Naive thymus-derived CD4-positive, alpha-beta T cell (primary cell): ENCODE measurements at regions of chr19 and their contacts with region 1.

Region 1: DNA sequence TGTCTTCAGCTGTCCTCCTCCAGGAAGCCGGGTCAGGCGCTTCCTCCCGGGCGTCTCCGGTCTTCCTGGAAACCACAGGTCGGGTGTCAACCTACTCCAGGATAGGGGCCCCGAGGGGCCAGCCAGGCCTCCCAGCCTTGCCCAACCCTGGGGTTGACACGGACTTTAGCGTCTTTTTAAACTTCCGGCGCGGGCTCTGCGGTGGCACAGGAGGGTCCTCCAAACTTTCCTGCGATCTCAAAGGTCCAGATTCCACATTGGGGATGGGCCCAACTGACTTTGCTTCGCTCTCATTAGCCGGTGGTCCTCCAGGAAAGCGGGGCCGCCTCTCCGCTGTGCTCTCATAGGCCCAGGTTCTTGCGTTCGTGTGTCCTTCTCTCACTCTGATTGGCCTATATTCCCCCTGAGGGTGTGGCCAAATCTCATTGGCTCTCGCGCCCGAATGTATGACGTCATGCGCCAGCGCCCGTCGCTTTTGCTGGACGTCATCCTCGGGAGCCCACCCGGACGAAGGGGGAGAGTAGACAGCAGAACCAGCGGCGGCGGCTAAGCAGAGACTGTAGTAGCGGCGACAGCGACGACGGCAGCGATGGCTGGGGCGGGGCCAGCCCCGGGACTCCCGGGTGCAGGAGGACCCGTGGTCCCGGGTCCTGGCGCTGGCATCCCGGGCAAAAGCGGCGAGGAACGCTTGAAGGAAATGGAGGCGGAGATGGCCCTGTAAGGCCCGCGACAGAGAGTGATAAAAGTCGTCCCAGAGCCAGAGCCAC is at the start of gene RBM42:
- DNase-seq: peak; percentile 87 to 98 (median 97)
- ATAC-seq: peak; percentile 100
- H3K4me3 ChIP-seq: peak within 1 kb of the TSS; percentile 89
- H3K4me3 Mint-ChIP-seq: peak within 1 kb of the TSS; percentile 91 to 100 (median 98)
- H3K27ac ChIP-seq: peak within 1 kb of the TSS; percentile 89
- H3K27ac Mint-ChIP-seq: peak within 1 kb of the TSS; percentile 92 to 100 (median 99)
- H3K4me1 ChIP-seq: peaks cover 6 to 15% of the 10 kb centered on the region in 2 donors
- H3K4me1 Mint-ChIP-seq: peaks cover 12 to 35% (median 25%) of the 10 kb centered on the region in 7 donors
- H3K27me3 ChIP-seq: no peaks in the 10 kb centered on the region
- H3K27me3 Mint-ChIP-seq: no peaks in the 10 kb centered on the region
- total RNA-seq, gene RBM42: 39.0 to 98.2 (median 51.3) TPM

Region 2: DNA sequence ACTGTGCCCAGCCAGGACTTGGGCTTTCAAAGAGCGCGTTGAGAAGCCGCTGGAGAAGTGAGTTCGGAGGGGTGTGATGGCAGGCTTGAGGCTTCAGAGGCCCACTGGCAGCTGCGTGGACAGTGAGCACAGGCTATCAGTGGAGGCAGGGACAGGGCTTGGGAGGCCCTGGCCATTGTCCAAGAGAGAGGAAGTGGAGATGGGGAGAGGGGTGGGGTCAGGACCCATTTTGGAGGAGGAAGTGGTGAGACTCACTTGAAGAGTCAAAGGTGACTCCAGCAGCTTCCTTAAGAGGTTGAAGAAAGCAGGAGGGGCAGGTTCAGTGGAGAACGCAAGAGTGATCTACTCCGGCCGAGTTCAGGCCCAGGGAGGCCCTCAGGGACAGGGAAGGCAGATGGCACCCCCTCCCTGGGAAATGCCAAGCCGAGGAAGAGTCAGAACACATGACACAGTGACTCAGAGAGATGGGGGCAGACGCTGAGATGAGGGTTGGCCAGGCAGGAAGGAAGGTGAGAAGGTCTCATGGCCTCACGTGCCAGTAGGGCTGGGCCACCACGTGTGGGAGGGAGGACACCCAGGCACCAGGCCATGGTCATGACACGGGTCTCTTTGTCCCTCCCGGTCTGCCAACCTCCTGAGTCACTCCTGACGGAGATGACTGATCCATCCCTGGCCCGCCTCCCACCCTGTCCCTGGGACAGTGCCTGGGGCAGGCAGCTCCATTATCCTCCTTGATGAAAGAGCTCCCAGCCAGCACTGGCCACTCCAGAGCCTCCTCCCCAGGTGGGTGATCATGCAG is 309.9 kb before region 1 on chr19:
- CTCF ChIA-PET with region 1: no interaction called
- POLR2A ChIA-PET with region 1: no interaction called
- intact Hi-C with region 1: no loop called
- DNase-seq: peak in 1 of 9 donors; percentile 26
- ATAC-seq: peak; percentile 87
- H3K4me3 ChIP-seq: no peak overlapping the region
- H3K4me3 Mint-ChIP-seq: no peak overlapping the region
- H3K27ac ChIP-seq: no peak overlapping the region
- H3K27ac Mint-ChIP-seq: peak overlapping the region in 3 of 9 donors; percentile 27 to 39 (median 31)
- H3K4me1 ChIP-seq: no peaks in the 10 kb centered on the region
- H3K4me1 Mint-ChIP-seq: peaks cover 0 to 16% (median 8%) of the 10 kb centered on the region in 7 donors
- H3K27me3 ChIP-seq: no peaks in the 10 kb centered on the region
- H3K27me3 Mint-ChIP-seq: peaks cover 0 to 8% (median 0%) of the 10 kb centered on the region in 5 donors

Region 3: DNA sequence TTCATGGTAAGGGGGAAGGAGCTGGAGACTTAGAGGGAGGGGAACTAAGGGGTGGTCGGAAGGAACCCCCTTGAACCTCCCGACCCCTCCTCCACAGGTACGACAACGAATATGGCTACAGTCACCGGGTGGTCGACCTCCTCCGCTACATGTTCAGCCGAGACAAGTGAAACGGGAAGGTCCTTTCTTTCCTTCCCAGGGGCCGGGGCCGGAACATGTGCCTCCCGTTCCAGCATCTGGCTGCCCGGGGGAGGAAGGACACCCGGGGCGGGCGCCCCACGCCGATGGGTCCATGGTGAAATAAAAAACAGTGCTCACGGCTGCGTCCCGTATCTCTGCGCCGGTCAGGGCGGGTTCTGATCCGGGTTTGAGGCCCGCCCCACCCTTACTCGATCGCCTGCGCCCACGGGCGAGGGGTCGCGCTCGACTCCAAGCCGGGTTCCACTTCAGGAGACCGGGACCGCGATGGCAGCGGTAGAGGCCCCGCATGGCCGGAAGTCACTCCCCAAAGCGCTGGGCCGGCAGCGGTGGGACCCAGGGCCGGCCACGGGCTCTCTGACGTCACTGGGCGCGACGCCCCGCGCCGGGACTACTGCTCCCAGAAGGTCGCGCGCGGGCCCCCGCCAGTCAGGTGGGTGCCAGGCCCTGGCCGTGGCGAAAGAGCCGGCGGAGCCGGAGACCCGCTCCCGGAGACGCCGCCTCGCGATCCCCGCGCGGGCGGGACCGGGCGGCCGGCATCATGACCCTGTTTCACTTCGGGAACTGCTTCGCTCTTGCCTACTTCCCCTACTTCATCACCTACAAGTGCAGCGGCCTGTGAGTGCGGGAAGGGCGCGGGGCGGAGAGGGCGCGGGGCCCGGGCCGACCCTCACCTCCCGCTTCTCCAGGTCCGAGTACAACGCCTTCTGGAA is 83.5 kb before region 1 on chr19 and contains the start of gene TMEM147:
- CTCF ChIA-PET with region 1: interaction called, 3 read pairs
- POLR2A ChIA-PET with region 1: interaction called, 4 read pairs
- intact Hi-C with region 1: loop called (anchors 1 kb)
- DNase-seq: peak; percentile 60 to 90 (median 69)
- ATAC-seq: peak; percentile 91
- H3K4me3 ChIP-seq: peak within 1 kb of the TSS; percentile 78
- H3K4me3 Mint-ChIP-seq: peak within 1 kb of the TSS; percentile 79 to 93 (median 89)
- H3K27ac ChIP-seq: peak within 1 kb of the TSS; percentile 84
- H3K27ac Mint-ChIP-seq: peak within 1 kb of the TSS; percentile 52 to 96 (median 90)
- H3K4me1 ChIP-seq: peaks cover 13 to 16% of the 10 kb centered on the region in 2 donors
- H3K4me1 Mint-ChIP-seq: peaks cover 27 to 41% (median 38%) of the 10 kb centered on the region in 7 donors
- H3K27me3 ChIP-seq: no peaks in the 10 kb centered on the region
- H3K27me3 Mint-ChIP-seq: no peaks in the 10 kb centered on the region
- total RNA-seq, gene TMEM147: 24.7 to 54.0 (median 34.6) TPM

Region 4: GRCh38 chr19:35612559-35613321 is 16.0 kb before region 1 on chr19 and contains the start of gene HAUS5:
- CTCF ChIA-PET with region 1: interaction called, 4 read pairs
- POLR2A ChIA-PET with region 1: interaction called, 3 read pairs
- intact Hi-C with region 1: loop called (anchors 1 kb)
- DNase-seq: peak; percentile 92 to 99 (median 95)
- ATAC-seq: peak; percentile 92
- H3K4me3 ChIP-seq: peak within 1 kb of the TSS; percentile 98
- H3K4me3 Mint-ChIP-seq: peak within 1 kb of the TSS; percentile 86 to 94 (median 89)
- H3K27ac ChIP-seq: peak within 1 kb of the TSS; percentile 86
- H3K27ac Mint-ChIP-seq: peak within 1 kb of the TSS; percentile 88 to 98 (median 94)
- H3K4me1 ChIP-seq: peaks cover 24 to 28% of the 10 kb centered on the region in 2 donors
- H3K4me1 Mint-ChIP-seq: peaks cover 4 to 50% (median 43%) of the 10 kb centered on the region in 7 donors
- H3K27me3 ChIP-seq: no peaks in the 10 kb centered on the region
- H3K27me3 Mint-ChIP-seq: peaks cover 0 to 2% (median 0%) of the 10 kb centered on the region in 5 donors
- total RNA-seq, gene HAUS5: 23.6 to 40.0 (median 28.4) TPM

Region 5: DNA sequence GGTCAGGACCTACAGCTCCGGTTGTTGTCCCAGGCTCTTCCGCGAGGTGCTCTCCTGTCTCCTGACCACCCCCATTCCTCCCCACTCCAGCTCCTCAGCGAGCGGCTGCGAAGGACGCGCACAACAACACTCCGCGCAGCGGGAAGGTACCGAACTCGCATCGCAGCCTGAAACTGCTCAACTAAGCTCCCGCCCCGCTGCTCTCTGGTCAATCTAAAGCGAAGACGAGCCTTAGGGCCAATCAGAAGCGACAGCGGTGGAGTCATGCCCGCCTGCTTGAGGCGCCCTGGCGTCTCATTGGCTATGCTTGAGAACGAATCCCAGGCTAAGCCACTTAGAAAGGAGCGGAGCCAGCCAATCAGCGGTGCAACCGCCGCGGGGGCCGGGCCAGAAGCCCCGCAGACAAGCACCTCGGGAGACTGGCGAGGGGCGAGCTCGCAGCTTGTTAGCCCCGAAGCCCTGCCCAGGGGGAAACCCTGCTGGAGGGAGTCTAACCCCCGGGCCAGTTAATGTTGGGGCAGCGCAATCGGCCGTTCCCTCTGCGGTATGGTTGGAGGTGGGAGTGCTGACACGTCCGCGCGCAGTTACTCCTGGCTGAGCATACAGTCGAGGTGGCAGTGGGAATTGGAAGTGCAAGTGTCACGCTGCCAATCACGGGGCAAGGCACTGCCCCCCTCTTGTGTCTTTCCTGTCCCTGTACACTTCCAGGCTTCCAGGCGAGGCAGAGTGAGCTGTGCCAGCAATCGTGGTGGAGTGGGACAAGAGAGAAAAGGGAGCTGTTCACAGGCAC is 73.7 kb after region 1 on chr19:
- CTCF ChIA-PET with region 1: no interaction called
- POLR2A ChIA-PET with region 1: no interaction called
- intact Hi-C with region 1: loop called in 1 of 2 experiments (anchors 1 kb)
- DNase-seq: peak; percentile 66 to 96 (median 90)
- ATAC-seq: peak; percentile 100
- H3K4me3 ChIP-seq: peak overlapping the region; percentile 85
- H3K4me3 Mint-ChIP-seq: peak overlapping the region; percentile 88 to 100 (median 96)
- H3K27ac ChIP-seq: peak overlapping the region; percentile 66
- H3K27ac Mint-ChIP-seq: peak overlapping the region; percentile 79 to 98 (median 93)
- H3K4me1 ChIP-seq: no peaks in the 10 kb centered on the region
- H3K4me1 Mint-ChIP-seq: peaks cover 5 to 22% (median 6%) of the 10 kb centered on the region in 7 donors
- H3K27me3 ChIP-seq: no peaks in the 10 kb centered on the region
- H3K27me3 Mint-ChIP-seq: peaks cover 0 to 4% (median 0%) of the 10 kb centered on the region in 5 donors